HepG2 (cell line): ENCODE measurements at regions of chr19 and their contacts with region 1.

Region 1: DNA sequence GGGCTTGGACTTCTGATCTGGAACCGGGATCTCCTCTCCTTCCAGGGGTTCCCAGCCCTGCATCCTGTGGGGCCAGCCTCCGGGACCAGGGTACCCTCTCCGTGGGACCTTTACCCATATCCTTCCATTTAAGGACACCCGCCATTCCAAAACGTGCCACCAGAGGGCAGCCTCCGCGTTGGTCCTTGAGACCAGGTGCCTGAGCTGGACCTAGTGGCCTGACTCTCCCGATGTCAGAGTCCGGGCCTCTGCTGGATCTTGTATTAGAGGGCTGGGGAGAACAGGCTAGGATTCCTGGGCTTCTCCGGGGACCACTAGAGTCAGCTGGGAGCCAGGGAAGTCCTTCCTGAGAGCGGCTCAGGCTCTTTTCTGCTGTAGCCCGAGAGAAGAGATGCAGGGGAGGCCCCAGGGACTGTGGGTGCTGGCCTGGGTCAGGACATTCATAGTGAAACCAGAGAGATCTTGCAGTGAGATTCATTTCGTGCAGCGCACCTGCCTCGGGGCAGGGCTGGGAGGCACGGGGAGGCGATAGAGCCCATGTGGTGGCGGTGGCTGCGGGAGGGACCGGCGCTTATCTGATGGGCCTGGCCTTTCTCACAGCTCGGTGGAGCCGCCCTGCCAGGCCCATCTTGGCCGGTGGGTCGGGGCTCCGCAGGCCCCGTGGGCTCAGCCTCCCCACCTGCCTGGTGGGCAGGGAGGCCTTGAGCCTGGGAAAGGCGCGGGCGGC is 9.8 kb upstream of the SLC7A10 start:
- DNase-seq: peak; percentile 78
- ATAC-seq: peak; percentile 86
- H3K4me3 ChIP-seq: peak overlapping the region in 2 of 3 experiments; percentile 37 to 53; a peak in 3 of 6 replicates
- H3K27ac ChIP-seq: no peak overlapping the region
- H3K4me1 ChIP-seq: peaks cover 44% of the 10 kb centered on the region
- H3K27me3 ChIP-seq: peaks cover 0 to 6% of the 10 kb centered on the region in 2 experiments; a peak in 1 of 5 replicates
- CTCF ChIP-seq: peak; percentile 95
- EP300 ChIP-seq: no peak
- POLR2A ChIP-seq: no peak
- RAD21 ChIP-seq: peak; percentile 89

Region 2: GRCh38 chr19:33208904-33209849 is 26.3 kb before region 1 on chr19:
- CTCF ChIA-PET with region 1: no interaction called
- POLR2A ChIA-PET with region 1: no interaction called
- in situ Hi-C with region 1: no loop called
- intact Hi-C with region 1: no loop called
- DNase-seq: no peak
- ATAC-seq: no peak
- H3K4me3 ChIP-seq: no peak overlapping the region
- H3K27ac ChIP-seq: no peak overlapping the region
- H3K4me1 ChIP-seq: peaks cover 16% of the 10 kb centered on the region
- H3K27me3 ChIP-seq: peaks cover 7 to 14% of the 10 kb centered on the region in 2 experiments; a peak in 3 of 5 replicates
- CTCF ChIP-seq: no peak
- EP300 ChIP-seq: no peak
- POLR2A ChIP-seq: no peak
- RAD21 ChIP-seq: no peak

Region 3: GRCh38 chr19:33311326-33311682 is 75.9 kb after region 1 on chr19:
- CTCF ChIA-PET with region 1: interaction called, 12 read pairs
- POLR2A ChIA-PET with region 1: no interaction called
- in situ Hi-C with region 1: no loop called
- intact Hi-C with region 1: no loop called
- DNase-seq: no peak
- ATAC-seq: peak; percentile 80
- H3K4me3 ChIP-seq: no peak overlapping the region
- H3K27ac ChIP-seq: no peak overlapping the region
- H3K4me1 ChIP-seq: peaks cover 27% of the 10 kb centered on the region
- H3K27me3 ChIP-seq: no peaks in the 10 kb centered on the region
- CTCF ChIP-seq: peak; percentile 78
- EP300 ChIP-seq: no peak
- POLR2A ChIP-seq: no peak
- RAD21 ChIP-seq: peak; percentile 71; the same call in 1 of the 2 replicates